PC-9 (cell line): ENCODE measurements at regions of chr12 and their contacts with region 1.

Region 1: GRCh38 chr12:11798856-11799501 is 149.5 kb downstream of the ETV6 start:
- DNase-seq: peak in 1 of 2 experiments; percentile 78
- H3K4me3 ChIP-seq: no peak overlapping the region
- H3K27ac ChIP-seq: no peak overlapping the region; the same call in 1 of the 2 replicates
- H3K4me1 ChIP-seq: peaks cover 46% of the 10 kb centered on the region
- H3K27me3 ChIP-seq: no peaks in the 10 kb centered on the region
- CTCF ChIP-seq: no peak

Region 2: DNA sequence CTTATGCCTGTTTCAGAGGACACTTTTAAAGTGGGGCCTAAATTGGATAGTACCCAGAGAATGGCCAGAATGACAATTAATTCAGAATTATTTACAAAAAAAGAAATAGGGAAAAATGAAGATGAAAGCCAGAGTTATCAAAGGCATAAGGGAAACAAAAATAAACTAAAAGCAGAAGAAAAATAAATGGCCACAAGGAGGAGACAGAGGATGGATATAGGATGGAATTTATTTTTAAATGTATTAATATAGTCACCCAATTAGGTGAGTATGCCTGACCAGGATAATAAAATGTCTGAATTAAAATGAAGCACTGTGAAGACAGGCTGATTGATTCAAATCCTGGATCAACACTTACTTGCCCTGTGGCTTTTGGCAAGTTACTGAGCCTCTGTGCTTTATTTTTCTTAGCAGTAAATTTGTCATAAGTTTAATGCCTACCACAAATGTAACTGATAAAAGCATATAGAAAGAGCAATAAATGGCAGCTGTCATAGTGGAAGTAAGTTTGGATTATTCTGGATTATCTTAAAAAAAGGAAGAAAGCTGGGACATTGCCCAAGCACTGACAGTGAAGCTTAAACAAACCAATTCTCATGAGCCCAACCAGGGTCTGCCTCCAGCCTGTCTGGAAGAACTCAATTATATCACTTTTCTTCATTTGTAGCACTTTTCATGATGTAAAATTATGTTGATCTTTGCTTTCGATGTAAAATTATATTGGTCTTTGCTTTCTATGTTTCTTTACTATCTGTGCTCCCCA is 1765.0 kb before region 1 on chr12:
- CTCF ChIA-PET with region 1: no interaction called
- POLR2A ChIA-PET with region 1: interaction called, 10 read pairs
- intact Hi-C with region 1: no loop called
- DNase-seq: no peak
- H3K4me3 ChIP-seq: no peak overlapping the region
- H3K27ac ChIP-seq: no peak overlapping the region
- H3K4me1 ChIP-seq: no peaks in the 10 kb centered on the region
- H3K27me3 ChIP-seq: no peaks in the 10 kb centered on the region
- CTCF ChIP-seq: peak; percentile 80

Region 3: DNA sequence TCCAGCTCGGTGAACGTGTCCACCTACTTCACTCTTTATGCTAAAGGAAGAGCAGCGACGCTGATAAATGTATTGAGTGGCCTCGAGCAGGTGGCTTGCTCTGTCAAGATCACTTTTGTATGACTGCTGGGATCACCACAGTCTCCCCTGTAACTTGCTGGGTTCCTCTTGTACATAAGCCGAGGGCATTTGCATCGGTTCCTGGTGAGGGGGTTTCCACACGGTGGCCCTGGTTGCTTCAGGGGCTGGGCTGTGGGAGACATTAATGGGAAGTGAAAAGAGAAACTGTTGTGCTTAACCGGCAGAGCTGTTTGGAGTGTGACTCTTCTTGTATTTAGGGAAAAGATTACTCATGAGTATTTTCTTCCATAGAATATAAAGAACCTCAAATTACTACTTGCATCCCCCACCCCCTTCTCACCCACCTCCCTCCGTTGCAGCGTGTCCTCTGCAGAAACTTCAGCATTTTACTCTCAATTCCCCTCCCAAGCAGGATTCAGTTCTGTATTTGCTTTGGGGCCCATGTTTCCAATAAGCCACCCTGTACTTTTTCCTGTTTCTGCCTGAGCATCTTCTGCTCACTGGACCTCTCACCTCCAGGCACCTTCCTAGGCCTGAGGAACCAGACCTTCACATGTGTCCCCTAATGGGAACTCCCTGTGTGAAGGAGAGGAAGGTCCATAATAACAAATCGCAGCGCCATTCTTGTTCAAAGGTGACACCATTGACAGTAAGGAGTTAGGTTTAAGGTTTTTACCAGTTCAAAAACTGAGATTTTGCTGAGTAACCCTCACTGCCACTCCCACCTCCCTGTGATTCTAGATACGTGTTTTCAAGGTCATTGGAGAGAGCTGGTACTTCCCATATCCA is 37.5 kb after region 1 on chr12:
- CTCF ChIA-PET with region 1: no interaction called
- POLR2A ChIA-PET with region 1: no interaction called
- intact Hi-C with region 1: no loop called
- DNase-seq: no peak
- H3K4me3 ChIP-seq: no peak overlapping the region
- H3K27ac ChIP-seq: no peak overlapping the region
- H3K4me1 ChIP-seq: peaks cover 28% of the 10 kb centered on the region
- H3K27me3 ChIP-seq: no peaks in the 10 kb centered on the region
- CTCF ChIP-seq: no peak

Region 4: DNA sequence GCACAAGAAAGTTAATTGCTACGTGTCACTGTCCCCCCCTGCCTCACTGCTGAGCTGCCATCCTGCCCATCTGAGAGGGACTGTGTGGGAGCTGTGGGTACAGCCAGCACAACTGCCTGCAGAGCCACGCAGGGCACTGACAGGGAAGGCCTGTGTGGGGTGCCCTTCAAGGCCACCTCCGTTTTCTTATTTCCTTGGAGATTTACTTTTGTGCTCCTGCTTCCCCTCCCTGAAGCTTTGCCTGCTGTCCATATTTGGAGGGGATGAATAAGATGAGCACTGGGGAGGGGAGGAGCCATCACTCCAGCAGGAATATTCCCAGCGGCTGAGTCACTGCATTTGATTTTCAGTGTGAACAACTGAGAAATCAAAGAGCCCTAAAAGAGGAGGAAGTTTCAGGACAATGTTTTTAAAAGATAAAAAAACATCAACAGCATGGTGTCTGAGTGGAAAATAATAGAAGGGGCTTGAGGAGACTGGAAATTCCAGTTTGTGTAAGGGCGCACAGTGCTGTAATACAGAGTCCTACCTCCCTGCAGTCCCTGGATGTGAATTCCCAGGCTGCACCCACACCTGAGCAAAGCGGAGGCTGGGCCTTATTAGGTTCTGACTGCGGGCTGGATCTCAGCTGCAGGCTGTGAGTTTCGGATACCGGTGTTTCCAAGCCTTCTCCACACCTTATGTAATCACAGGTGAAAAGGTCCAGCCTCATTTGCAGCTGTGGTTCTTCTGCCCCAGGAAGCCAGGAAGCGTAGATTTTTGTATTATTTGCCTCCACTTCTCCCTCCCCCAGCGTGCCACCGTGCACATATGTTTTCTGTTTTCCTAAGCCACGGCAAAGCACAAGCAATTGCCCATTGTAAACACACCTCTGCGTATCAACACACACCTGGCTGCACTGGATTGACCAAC is 79.1 kb after region 1 on chr12:
- CTCF ChIA-PET with region 1: no interaction called
- POLR2A ChIA-PET with region 1: interaction called, 4 read pairs
- intact Hi-C with region 1: loop called (anchors 1 kb)
- DNase-seq: peak; percentile 85 to 93
- H3K4me3 ChIP-seq: peak overlapping the region; percentile 45; the same call in 1 of the 2 replicates
- H3K27ac ChIP-seq: peak overlapping the region; percentile 96
- H3K4me1 ChIP-seq: peaks cover 64% of the 10 kb centered on the region
- H3K27me3 ChIP-seq: no peaks in the 10 kb centered on the region
- CTCF ChIP-seq: no peak

Region 5: GRCh38 chr12:11885261-11886038 is 86.5 kb after region 1 on chr12:
- CTCF ChIA-PET with region 1: no interaction called
- POLR2A ChIA-PET with region 1: interaction called, 4 read pairs
- intact Hi-C with region 1: loop called (anchors 1 kb)
- DNase-seq: peak; percentile 89 to 99
- H3K4me3 ChIP-seq: peak overlapping the region; percentile 35; the same call in 1 of the 2 replicates
- H3K27ac ChIP-seq: peak overlapping the region; percentile 99
- H3K4me1 ChIP-seq: peaks cover 39% of the 10 kb centered on the region
- H3K27me3 ChIP-seq: no peaks in the 10 kb centered on the region
- CTCF ChIP-seq: no peak

Region 6: GRCh38 chr12:11958221-11959091 is 159.5 kb after region 1 on chr12:
- CTCF ChIA-PET with region 1: no interaction called
- POLR2A ChIA-PET with region 1: no interaction called
- intact Hi-C with region 1: loop called (anchors 1 kb)
- DNase-seq: peak; percentile 60 to 92
- H3K4me3 ChIP-seq: peak overlapping the region; percentile 12; the same call in 1 of the 2 replicates
- H3K27ac ChIP-seq: peak overlapping the region; percentile 99
- H3K4me1 ChIP-seq: peaks cover 28% of the 10 kb centered on the region
- H3K27me3 ChIP-seq: no peaks in the 10 kb centered on the region
- CTCF ChIP-seq: no peak; the same call in 1 of the 2 replicates

Region 7: DNA sequence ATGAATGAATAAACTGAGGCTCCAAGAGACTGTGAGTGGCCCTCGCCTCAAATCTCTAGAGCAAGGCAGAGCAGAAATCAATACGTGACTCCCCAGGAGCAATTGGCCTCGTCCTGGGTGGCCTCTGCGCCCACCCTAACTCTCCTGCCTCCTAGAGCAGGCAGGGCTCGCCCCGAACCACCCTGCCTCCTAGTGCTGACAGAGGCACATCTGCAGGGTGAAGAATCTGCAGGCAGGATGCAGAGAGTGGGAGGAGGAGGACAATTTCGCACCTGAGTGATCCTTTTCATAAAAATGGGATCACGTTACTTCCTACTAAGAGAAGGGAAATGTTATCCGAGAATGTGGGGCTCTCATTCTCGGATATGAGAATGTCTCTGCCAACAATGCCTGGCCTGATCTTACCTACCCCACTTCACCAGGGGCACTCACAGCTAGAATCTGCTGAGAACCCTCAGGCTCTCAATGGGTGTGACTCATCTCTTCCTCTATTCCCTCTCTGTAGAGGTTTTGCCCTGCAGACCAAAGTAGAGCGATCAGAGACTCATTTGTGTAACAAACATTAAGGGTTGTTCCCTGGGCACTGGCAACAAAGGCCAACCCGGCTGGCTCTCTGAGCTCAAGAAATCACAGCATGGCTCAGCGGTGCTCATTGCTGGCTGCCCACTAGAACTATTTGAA is 210.1 kb after region 1 on chr12:
- CTCF ChIA-PET with region 1: no interaction called
- POLR2A ChIA-PET with region 1: interaction called, 3 read pairs
- intact Hi-C with region 1: loop called (anchors 5 kb)
- DNase-seq: peak; percentile 80 to 98
- H3K4me3 ChIP-seq: no peak overlapping the region
- H3K27ac ChIP-seq: peak overlapping the region; percentile 94
- H3K4me1 ChIP-seq: peaks cover 45% of the 10 kb centered on the region
- H3K27me3 ChIP-seq: no peaks in the 10 kb centered on the region
- CTCF ChIP-seq: no peak; the same call in 1 of the 2 replicates